ENCODE measurements at regions of chr13 and their contacts with region 1.

Region 1: GRCh38 chr13:45269204-45269603 is 68.4 kb upstream of the KCTD4 start:
- DNase-seq: no peak
- H3K4me3 ChIP-seq: no peak overlapping the region
- H3K27ac ChIP-seq: no peak overlapping the region
- H3K27me3 ChIP-seq: no peaks in the 10 kb centered on the region
- CTCF ChIP-seq: no peak

Region 2: DNA sequence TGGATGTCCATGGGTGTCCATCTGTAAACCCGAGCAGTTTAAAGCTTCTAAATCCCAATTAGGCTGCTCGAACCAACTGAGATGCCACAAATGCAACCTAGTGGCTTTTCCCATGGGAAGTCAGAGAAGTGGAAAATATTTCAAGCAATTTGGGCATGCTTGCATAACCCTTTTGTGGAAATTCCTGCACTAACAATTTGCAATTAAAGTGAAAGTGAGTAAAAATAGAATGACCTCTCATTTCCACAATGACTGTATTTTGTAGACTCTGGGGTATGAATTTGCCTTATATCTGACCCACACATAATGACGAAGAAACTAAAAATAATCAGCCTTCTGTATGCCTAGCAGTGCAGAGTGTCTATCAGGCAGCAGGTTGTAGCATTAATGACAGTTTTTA is 601.3 kb before region 1 on chr13:
- CTCF ChIA-PET with region 1: no interaction called
- POLR2A ChIA-PET with region 1: no interaction called
- DNase-seq: no peak
- H3K4me3 ChIP-seq: no peak overlapping the region
- H3K27ac ChIP-seq: no peak overlapping the region
- H3K27me3 ChIP-seq: no peaks in the 10 kb centered on the region
- CTCF ChIP-seq: no peak

Region 3: GRCh38 chr13:45297456-45298205 is 28.4 kb after region 1 on chr13:
- CTCF ChIA-PET with region 1: interaction called, 10 read pairs
- POLR2A ChIA-PET with region 1: no interaction called
- DNase-seq: no peak
- H3K4me3 ChIP-seq: no peak overlapping the region
- H3K27ac ChIP-seq: no peak overlapping the region
- H3K27me3 ChIP-seq: no peaks in the 10 kb centered on the region
- CTCF ChIP-seq: no peak

Measured in AG04450 (cell line).